ENCODE measurements at regions of chr1 and their contacts with region 1.

Region 1: GRCh38 chr1:40344597-40344996 is 27.5 kb upstream of the COL9A2 start:
- H3K4me3 Mint-ChIP-seq: peak overlapping the region; percentile 91
- H3K27ac Mint-ChIP-seq: peak overlapping the region; percentile 89
- H3K4me1 Mint-ChIP-seq: peaks cover 75% of the 10 kb centered on the region
- H3K27me3 Mint-ChIP-seq: no peaks in the 10 kb centered on the region

Region 2: GRCh38 chr1:40385437-40386358 is 41.1 kb after region 1 on chr1:
- intact Hi-C with region 1: loop called (anchors 5 kb)
- H3K4me3 Mint-ChIP-seq: peak overlapping the region; percentile 71
- H3K27ac Mint-ChIP-seq: peak overlapping the region; percentile 99
- H3K4me1 Mint-ChIP-seq: peaks cover 88% of the 10 kb centered on the region
- H3K27me3 Mint-ChIP-seq: no peaks in the 10 kb centered on the region

Region 3: GRCh38 chr1:40404670-40405462 is 60.3 kb after region 1 on chr1:
- intact Hi-C with region 1: loop called (anchors 5 kb)
- H3K4me3 Mint-ChIP-seq: no peak overlapping the region
- H3K27ac Mint-ChIP-seq: peak overlapping the region; percentile 75
- H3K4me1 Mint-ChIP-seq: peaks cover 53% of the 10 kb centered on the region
- H3K27me3 Mint-ChIP-seq: no peaks in the 10 kb centered on the region

Region 4: GRCh38 chr1:40416709-40417108 is 72.1 kb after region 1 on chr1:
- intact Hi-C with region 1: no loop called
- H3K4me3 Mint-ChIP-seq: no peak overlapping the region
- H3K27ac Mint-ChIP-seq: no peak overlapping the region
- H3K4me1 Mint-ChIP-seq: peaks cover 31% of the 10 kb centered on the region
- H3K27me3 Mint-ChIP-seq: no peaks in the 10 kb centered on the region

Measured in dendritic cell treated with granulocyte-macrophage colony-stimulating factor and Interleukin-4, amounts not matched to agents 40 ng/mL and 50 ng/mL, for 4 days (primary cell).